PC-9 (cell line): ENCODE measurements at regions of chr3 and their contacts with region 1.

Region 1: DNA sequence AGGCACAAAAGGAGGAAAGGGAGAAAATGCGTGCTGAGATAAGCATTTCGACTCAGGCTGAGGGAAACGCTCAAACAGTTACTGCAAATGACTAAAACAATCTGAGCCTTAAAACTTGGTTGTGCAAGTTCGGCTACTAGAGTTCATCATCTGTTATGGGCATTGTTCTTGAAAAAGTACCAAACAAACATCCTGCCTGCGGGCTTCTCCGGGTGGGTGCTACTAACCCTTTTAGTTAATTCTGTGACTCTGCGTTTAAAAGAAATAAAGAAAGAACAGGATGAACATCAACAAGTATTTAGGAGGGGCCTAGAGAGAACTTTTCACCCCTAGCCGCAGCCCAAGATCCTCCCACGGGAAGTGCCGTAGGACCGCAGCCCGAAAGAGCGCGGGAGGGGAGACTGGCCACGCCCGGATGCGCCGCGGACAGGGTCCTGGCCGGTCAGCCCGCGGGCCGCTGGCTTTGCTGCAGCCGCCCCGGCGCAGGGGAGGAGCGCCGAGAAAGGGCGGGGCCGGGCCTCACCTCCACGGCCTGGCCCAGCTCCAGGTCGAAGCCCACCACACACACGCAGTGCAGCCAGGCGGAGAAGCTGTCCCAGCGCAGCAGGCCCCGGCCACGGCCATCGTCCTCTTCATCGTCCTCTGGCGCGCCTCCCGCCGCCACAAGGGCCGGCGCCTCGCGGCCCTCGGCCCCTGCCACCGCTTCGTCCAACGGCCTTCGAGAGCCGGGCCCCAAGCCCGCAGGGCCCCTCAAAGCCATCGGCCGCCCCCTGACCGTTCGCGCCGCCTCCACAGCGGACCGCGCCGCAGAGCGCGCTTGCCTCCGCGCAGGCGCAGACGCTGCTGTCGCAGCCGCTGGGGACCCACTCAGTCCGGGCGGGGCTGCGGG is at the start of gene DENND6A:
- DNase-seq: peak; percentile 71 to 96
- H3K4me3 ChIP-seq: peak within 1 kb of the TSS; percentile 65
- H3K27ac ChIP-seq: peak within 1 kb of the TSS; percentile 91
- H3K4me1 ChIP-seq: peaks cover 32% of the 10 kb centered on the region
- H3K27me3 ChIP-seq: no peaks in the 10 kb centered on the region
- CTCF ChIP-seq: no peak
- total RNA-seq, gene DENND6A: 23.6 and 28.2 TPM in 2 replicates

Region 2: GRCh38 chr3:57169872-57170623 is 522.5 kb before region 1 on chr3:
- CTCF ChIA-PET with region 1: interaction called, 5 read pairs
- POLR2A ChIA-PET with region 1: interaction called, 15 read pairs
- intact Hi-C with region 1: no loop called
- DNase-seq: peak; percentile 60 to 75
- H3K4me3 ChIP-seq: peak overlapping the region; percentile 54
- H3K27ac ChIP-seq: no peak overlapping the region
- H3K4me1 ChIP-seq: peaks cover 3% of the 10 kb centered on the region; the same call in 1 of the 2 replicates
- H3K27me3 ChIP-seq: no peaks in the 10 kb centered on the region
- CTCF ChIP-seq: peak; percentile 81

Region 3: DNA sequence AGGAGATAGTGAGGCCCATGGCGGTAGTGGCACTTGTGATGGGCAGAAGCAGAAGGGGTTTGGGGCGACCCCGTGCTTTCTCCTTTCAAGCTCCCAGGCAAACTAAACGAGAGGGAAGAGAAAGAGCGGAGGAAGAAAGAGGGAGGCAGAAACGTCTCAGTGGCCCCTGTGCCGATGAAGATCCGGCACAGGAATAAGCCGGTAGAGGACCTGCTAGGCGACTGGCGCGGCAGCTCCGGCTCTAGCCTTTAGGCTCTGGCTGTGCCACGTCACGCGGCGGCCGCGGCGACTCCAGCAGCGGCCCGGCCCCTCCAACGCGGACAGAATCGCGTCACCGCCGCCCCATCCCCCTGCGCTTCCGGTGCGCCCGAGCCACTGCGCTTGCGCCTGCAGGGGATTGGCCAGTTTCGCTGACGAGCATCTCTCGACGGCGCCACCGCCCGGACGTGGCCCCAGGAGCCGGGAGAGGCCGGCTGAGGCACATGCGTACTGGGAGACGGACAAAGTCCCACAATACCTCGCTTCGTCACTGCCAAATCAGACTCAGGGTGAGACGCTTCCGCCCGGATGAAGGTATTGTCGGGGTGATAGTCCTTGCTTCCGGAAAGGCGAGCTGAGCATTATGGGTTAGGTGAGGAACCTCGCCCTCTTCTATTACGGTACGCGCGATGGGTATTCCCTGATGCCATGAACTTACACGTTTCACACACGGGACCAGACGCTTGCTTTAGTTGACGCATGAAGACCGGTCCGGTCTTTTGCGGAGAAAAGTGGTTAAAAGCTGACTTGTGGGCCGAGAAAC is 95.2 kb before region 1 on chr3 and contains the start of gene ARF4:
- CTCF ChIA-PET with region 1: no interaction called
- POLR2A ChIA-PET with region 1: interaction called, 3 read pairs
- intact Hi-C with region 1: loop called (anchors 2 kb)
- DNase-seq: peak; percentile 97 to 99
- H3K4me3 ChIP-seq: peak within 1 kb of the TSS; percentile 80
- H3K27ac ChIP-seq: peak within 1 kb of the TSS; percentile 97
- H3K4me1 ChIP-seq: peaks cover 36% of the 10 kb centered on the region
- H3K27me3 ChIP-seq: no peaks in the 10 kb centered on the region
- CTCF ChIP-seq: no peak; the same call in 1 of the 2 replicates
- total RNA-seq, gene ARF4: 132 and 182 TPM in 2 replicates

Region 4: DNA sequence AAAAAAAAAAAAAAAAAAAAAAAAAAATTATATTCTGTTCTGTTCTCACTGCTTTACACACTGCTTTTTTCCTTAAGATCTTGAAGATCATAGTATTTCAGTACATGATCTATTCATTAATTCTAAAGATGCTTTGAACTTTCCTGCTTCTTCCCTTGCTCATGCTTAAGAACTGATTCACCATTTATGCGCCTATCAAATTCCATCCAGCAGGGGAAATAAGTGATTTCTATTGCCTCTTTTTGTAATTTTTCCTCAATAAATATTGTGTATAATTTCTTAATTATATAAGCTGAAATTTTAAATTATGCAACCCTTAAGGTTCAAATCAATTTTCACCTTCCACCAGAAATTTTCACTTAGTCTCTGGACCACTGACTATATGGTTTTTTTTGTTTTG is 10.2 kb before region 1 on chr3:
- CTCF ChIA-PET with region 1: interaction called, 10 read pairs
- POLR2A ChIA-PET with region 1: no interaction called
- intact Hi-C with region 1: no loop called
- DNase-seq: no peak
- H3K4me3 ChIP-seq: no peak overlapping the region
- H3K27ac ChIP-seq: no peak overlapping the region
- H3K4me1 ChIP-seq: no peaks in the 10 kb centered on the region
- H3K27me3 ChIP-seq: no peaks in the 10 kb centered on the region
- CTCF ChIP-seq: peak; percentile 55

Region 5: GRCh38 chr3:57709559-57709958 is 17.1 kb after region 1 on chr3:
- CTCF ChIA-PET with region 1: no interaction called
- POLR2A ChIA-PET with region 1: no interaction called
- intact Hi-C with region 1: no loop called
- DNase-seq: peak in 1 of 2 experiments; percentile 59
- H3K4me3 ChIP-seq: no peak overlapping the region
- H3K27ac ChIP-seq: 0 out of 2 replicates have a peak overlapping the region, but pooled peaks have one; percentile 15
- H3K4me1 ChIP-seq: peaks cover 5% of the 10 kb centered on the region
- H3K27me3 ChIP-seq: no peaks in the 10 kb centered on the region
- CTCF ChIP-seq: no peak

Region 6: GRCh38 chr3:57826245-57826951 is 133.9 kb after region 1 on chr3:
- CTCF ChIA-PET with region 1: no interaction called
- POLR2A ChIA-PET with region 1: no interaction called
- intact Hi-C with region 1: loop called (anchors 2 kb)
- DNase-seq: no peak
- H3K4me3 ChIP-seq: no peak overlapping the region
- H3K27ac ChIP-seq: peak overlapping the region; percentile 47
- H3K4me1 ChIP-seq: peaks cover 29% of the 10 kb centered on the region
- H3K27me3 ChIP-seq: no peaks in the 10 kb centered on the region
- CTCF ChIP-seq: no peak; the same call in 1 of the 2 replicates